Activated CD4-positive, alpha-beta T cell treated with anti-CD3 and anti-CD28 coated beads for 36 hours (primary cell): ENCODE measurements at regions of chr4 and their contacts with region 1.

Region 1: GRCh38 chr4:165327211-165328100 is at the start of gene MSMO1:
- DNase-seq: peak; percentile 99
- ATAC-seq: peak; percentile 98
- H3K4me3 Mint-ChIP-seq: no peak within 1 kb of the TSS
- H3K27ac Mint-ChIP-seq: no peak within 1 kb of the TSS
- H3K4me1 Mint-ChIP-seq: peaks cover 41% of the 10 kb centered on the region
- H3K27me3 Mint-ChIP-seq: no peaks in the 10 kb centered on the region
- total RNA-seq, gene MSMO1: 48.4 to 50.7 TPM

Region 2: DNA sequence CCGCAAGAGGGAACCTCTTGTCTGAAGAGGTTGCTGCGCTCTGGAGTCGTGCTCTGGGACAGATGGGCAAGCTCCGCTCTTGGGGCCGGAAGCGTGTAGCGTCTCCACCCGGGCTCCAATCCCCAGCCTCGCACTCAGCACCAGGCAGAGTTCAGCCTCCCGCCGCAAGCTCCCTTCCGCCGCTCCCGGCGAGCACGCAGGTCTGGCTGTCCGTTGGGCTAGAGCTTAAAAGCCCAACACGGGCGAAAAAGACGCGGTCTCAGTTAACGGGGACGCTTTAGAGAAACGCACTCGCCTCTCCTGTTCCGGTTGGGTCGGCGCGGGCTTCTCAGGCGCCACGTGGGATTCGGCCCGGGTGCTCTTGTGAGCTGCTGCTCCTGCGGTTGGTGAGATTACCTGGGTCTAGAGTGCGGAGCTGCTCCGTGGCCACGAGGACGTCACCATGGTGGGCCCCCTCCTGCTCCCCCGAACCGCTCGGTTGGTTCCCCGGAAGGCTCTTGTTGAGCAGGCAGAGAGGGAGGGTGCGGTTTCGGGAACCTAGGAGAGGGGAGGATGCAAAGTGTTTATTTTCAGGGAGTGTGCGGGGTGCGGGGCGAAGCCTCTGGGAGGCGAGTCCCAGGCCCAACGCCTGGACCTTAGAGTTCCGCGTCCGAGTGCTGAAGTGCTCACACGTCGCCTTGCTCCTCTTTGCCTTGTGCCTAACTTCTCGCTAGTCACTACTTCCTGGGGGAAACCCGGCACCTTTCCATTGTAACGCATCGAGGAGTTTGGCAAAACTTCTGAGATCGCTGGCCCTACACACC is 1832.9 kb before region 1 on chr4 and contains the start of gene TMA16:
- CTCF ChIA-PET with region 1: no interaction called
- POLR2A ChIA-PET with region 1: no interaction called
- intact Hi-C with region 1: loop called in 1 of 2 experiments (anchors 10 kb)
- DNase-seq: peak; percentile 92
- ATAC-seq: peak; percentile 91
- H3K4me3 Mint-ChIP-seq: peak within 1 kb of the TSS; percentile 99
- H3K27ac Mint-ChIP-seq: peak within 1 kb of the TSS; percentile 100
- H3K4me1 Mint-ChIP-seq: peaks cover 27% of the 10 kb centered on the region
- H3K27me3 Mint-ChIP-seq: no peaks in the 10 kb centered on the region
- total RNA-seq, gene TMA16: 54.7 to 63.6 TPM

Region 3: GRCh38 chr4:165207431-165208220 is 119.8 kb before region 1 on chr4 and contains the start of gene KLHL2:
- CTCF ChIA-PET with region 1: interaction called, 3 read pairs
- POLR2A ChIA-PET with region 1: no interaction called
- intact Hi-C with region 1: loop called (anchors 1 kb)
- DNase-seq: peak; percentile 82
- ATAC-seq: peak; percentile 65
- H3K4me3 Mint-ChIP-seq: peak within 1 kb of the TSS; percentile 86
- H3K27ac Mint-ChIP-seq: peak within 1 kb of the TSS; percentile 89
- H3K4me1 Mint-ChIP-seq: peaks cover 68% of the 10 kb centered on the region
- H3K27me3 Mint-ChIP-seq: no peaks in the 10 kb centered on the region
- total RNA-seq, gene KLHL2: 20.9 to 22.1 TPM

Region 4: DNA sequence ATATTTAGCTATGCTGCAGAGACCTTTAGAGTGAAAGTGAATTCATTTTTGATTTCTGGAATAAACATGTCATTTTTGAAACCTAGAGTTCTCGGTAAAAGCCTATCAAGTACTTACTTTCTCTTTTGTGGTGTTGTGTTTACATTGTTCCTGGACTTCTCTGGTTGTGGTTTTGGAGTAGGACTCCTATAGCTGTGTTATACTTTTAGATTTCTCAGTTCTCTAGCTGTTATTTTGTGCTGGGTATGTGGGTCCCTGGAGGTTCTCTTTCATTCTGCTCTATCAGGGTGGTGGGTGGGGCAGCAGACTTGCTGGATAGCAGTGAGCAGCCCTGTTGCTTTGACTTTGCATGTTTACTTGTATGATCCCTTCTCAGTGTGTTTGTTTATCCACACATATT is 25.6 kb before region 1 on chr4:
- CTCF ChIA-PET with region 1: interaction called, 3 read pairs
- POLR2A ChIA-PET with region 1: interaction called, 3 read pairs
- intact Hi-C with region 1: loop called in 1 of 2 experiments (anchors 1 kb)
- DNase-seq: peak; percentile 27
- ATAC-seq: peak; percentile 97
- H3K4me3 Mint-ChIP-seq: peak overlapping the region; percentile 60
- H3K27ac Mint-ChIP-seq: peak overlapping the region; percentile 77
- H3K4me1 Mint-ChIP-seq: peaks cover 20% of the 10 kb centered on the region
- H3K27me3 Mint-ChIP-seq: no peaks in the 10 kb centered on the region